ENCODE measurements at regions of chr19 and their contacts with region 1.

Region 1: GRCh38 chr19:41449079-41449864 is 6.3 kb downstream of the ERICH4 start:
- DNase-seq: peak; percentile 90
- CTCF ChIP-seq: peak; percentile 97

Region 2: GRCh38 chr19:41411968-41412265 is 37.4 kb before region 1 on chr19:
- CTCF ChIA-PET with region 1: no interaction called
- POLR2A ChIA-PET with region 1: no interaction called
- DNase-seq: no peak
- CTCF ChIP-seq: no peak

Region 3: DNA sequence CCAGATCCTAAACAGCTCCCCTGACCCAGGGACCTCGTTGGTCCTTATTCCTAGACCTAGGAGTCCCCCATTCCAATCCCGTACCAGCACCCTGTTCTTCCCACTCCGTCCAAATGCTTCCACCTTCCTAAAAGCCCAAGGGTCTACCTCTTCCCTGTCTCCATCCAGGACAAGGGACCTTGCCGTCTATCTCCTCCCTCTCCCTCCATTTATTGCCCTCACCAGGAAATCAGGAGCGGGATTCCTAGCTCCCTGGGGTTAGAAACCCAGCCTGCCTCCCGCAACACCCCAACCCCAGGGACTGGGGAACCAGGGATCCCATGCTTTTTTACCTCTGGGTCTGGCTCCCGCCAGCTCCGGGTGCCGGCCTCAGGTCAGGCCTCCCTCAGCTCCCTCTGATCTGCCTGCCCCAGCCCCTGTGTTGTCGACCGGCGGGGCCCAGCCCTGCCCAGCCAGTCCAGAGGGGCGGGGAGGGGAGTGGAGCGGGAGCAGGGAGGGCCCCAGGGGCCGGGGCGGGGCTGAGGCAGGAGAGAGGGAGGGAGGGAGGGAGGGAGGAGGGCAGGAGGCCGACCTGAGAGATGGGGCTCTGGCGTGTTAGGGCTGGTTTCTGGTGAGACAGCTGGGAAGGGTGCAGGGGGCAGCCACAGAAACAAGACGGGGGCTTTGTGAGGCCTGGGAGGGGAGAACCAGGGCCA is 22.2 kb before region 1 on chr19 and contains the start of gene B3GNT8:
- CTCF ChIA-PET with region 1: interaction called, 19 read pairs
- POLR2A ChIA-PET with region 1: no interaction called
- DNase-seq: peak; percentile 86
- CTCF ChIP-seq: no peak

Region 4: GRCh38 chr19:41541990-41542584 is 92.8 kb after region 1 on chr19:
- CTCF ChIA-PET with region 1: interaction called, 24 read pairs
- POLR2A ChIA-PET with region 1: no interaction called
- DNase-seq: no peak
- CTCF ChIP-seq: peak; percentile 62

Region 5: GRCh38 chr19:41588497-41589209 is 139.4 kb after region 1 on chr19:
- CTCF ChIA-PET with region 1: interaction called, 152 read pairs
- POLR2A ChIA-PET with region 1: no interaction called
- DNase-seq: peak; percentile 45
- CTCF ChIP-seq: no peak

Region 6: GRCh38 chr19:41597600-41598041 is 148.3 kb after region 1 on chr19:
- CTCF ChIA-PET with region 1: interaction called, 152 read pairs
- POLR2A ChIA-PET with region 1: no interaction called
- DNase-seq: peak; percentile 82
- CTCF ChIP-seq: peak; percentile 94

Region 7: DNA sequence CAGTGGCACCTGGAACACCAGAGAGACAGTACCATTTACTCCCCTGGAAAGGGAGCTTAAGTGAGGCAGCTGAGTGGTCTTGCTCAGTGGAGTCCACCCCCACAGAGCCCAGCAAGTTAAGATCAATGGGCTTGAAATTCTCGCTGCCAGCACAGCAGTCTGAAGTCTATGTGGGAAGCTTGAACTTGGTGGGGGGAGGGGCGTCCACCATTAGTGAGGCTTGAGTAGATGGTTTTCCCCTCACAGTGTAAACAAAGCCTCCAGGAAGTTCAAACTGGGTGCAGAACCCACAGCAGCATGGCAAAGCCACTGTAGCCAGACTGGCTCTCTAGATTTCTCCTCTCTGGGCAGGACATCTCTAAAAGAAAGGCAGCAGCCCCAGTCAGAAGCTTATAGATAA is 207.9 kb after region 1 on chr19:
- CTCF ChIA-PET with region 1: no interaction called
- POLR2A ChIA-PET with region 1: no interaction called
- DNase-seq: no peak
- CTCF ChIP-seq: no peak